Naive thymus-derived CD4-positive, alpha-beta T cell (primary cell): ENCODE measurements at regions of chr9 and their contacts with region 1.

Region 1: GRCh38 chr9:4077499-4078102 is 222.3 kb downstream of the GLIS3 start:
- DNase-seq: peak in 6 of 9 donors; percentile 2 to 49 (median 12)
- ATAC-seq: peak; percentile 38
- H3K4me3 ChIP-seq: no peak overlapping the region
- H3K4me3 Mint-ChIP-seq: no peak overlapping the region
- H3K27ac ChIP-seq: no peak overlapping the region
- H3K27ac Mint-ChIP-seq: no peak overlapping the region
- H3K4me1 ChIP-seq: no peaks in the 10 kb centered on the region
- H3K4me1 Mint-ChIP-seq: no peaks in the 10 kb centered on the region
- H3K27me3 ChIP-seq: no peaks in the 10 kb centered on the region
- H3K27me3 Mint-ChIP-seq: peaks cover 0 to 22% (median 7%) of the 10 kb centered on the region in 5 donors

Region 2: DNA sequence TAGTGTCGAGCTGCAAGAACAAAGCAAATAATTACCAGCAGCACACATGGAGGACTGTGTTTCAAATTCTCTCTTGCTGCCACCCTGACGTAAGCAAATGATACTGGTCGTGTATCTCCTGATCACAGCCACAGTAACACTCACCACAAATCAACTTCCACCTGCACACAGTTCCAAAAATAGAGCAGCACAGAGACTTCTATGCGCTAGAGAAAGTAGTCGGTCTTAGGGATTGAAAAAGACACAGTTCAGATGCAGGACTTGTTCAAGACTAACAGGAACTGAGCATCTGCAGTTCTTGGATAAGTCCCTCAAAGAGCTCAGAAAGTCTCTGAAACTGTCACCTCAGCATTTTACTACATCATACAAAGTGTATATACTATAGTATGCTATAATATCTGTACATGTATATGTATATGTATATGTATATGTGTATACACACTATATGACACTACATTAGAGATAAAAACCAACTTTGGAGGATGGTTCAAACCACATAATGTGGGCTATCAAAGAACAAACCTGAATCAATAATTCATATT is 56.8 kb before region 1 on chr9:
- CTCF ChIA-PET with region 1: no interaction called
- POLR2A ChIA-PET with region 1: no interaction called
- intact Hi-C with region 1: no loop called
- DNase-seq: peak in 1 of 9 donors; percentile 1
- ATAC-seq: no peak
- H3K4me3 ChIP-seq: no peak overlapping the region
- H3K4me3 Mint-ChIP-seq: no peak overlapping the region
- H3K27ac ChIP-seq: no peak overlapping the region
- H3K27ac Mint-ChIP-seq: no peak overlapping the region
- H3K4me1 ChIP-seq: no peaks in the 10 kb centered on the region
- H3K4me1 Mint-ChIP-seq: peaks cover 0 to 4% (median 0%) of the 10 kb centered on the region in 7 donors
- H3K27me3 ChIP-seq: no peaks in the 10 kb centered on the region
- H3K27me3 Mint-ChIP-seq: peaks cover 0 to 6% (median 0%) of the 10 kb centered on the region in 5 donors

Region 3: DNA sequence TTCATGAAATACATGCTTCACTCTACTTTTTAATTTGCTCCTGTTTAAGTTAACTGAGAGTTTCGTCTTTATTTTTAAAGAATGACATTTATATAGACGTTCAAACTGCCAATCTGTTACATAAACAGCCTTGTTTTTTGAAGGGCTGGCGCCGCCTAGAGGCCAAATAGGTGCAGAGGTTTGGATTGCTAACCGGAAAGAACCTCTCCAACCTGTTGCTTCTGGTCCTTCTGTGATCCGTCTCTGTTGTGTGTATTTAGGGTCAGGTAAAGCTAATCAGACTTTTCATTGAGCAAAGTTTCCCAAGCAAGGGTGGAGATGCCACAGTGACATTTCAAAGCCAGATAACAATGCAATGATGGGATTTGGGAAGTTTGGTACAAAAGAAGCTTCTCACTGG is 261.8 kb after region 1 on chr9:
- CTCF ChIA-PET with region 1: interaction called, 4 read pairs
- POLR2A ChIA-PET with region 1: no interaction called
- intact Hi-C with region 1: loop called in 1 of 2 experiments (anchors 1 kb)
- DNase-seq: peak; percentile 62 to 84 (median 77)
- ATAC-seq: peak; percentile 90
- H3K4me3 ChIP-seq: no peak overlapping the region
- H3K4me3 Mint-ChIP-seq: peak overlapping the region in 9 of 10 donors; percentile 10 to 70 (median 48)
- H3K27ac ChIP-seq: no peak overlapping the region
- H3K27ac Mint-ChIP-seq: peak overlapping the region; percentile 16 to 92 (median 44)
- H3K4me1 ChIP-seq: no peaks in the 10 kb centered on the region
- H3K4me1 Mint-ChIP-seq: peaks cover 3 to 8% (median 7%) of the 10 kb centered on the region in 7 donors
- H3K27me3 ChIP-seq: no peaks in the 10 kb centered on the region
- H3K27me3 Mint-ChIP-seq: peaks cover 0 to 2% (median 0%) of the 10 kb centered on the region in 5 donors